ENCODE measurements at regions of chr7 and their contacts with region 1.

Region 1: GRCh38 chr7:43834463-43835251 is 34.7 kb downstream of the MRPS24 start:
- DNase-seq: no peak
- H3K4me3 ChIP-seq: no peak overlapping the region
- H3K27ac ChIP-seq: no peak overlapping the region
- H3K4me1 ChIP-seq: no peaks in the 10 kb centered on the region
- H3K27me3 ChIP-seq: no peaks in the 10 kb centered on the region
- CTCF ChIP-seq: no peak

Region 2: GRCh38 chr7:43577485-43577951 is 257.1 kb before region 1 on chr7:
- intact Hi-C with region 1: loop called (anchors 5 kb)
- DNase-seq: no peak
- H3K4me3 ChIP-seq: no peak overlapping the region
- H3K27ac ChIP-seq: no peak overlapping the region
- H3K4me1 ChIP-seq: no peaks in the 10 kb centered on the region
- H3K27me3 ChIP-seq: no peaks in the 10 kb centered on the region
- CTCF ChIP-seq: no peak

Region 3: DNA sequence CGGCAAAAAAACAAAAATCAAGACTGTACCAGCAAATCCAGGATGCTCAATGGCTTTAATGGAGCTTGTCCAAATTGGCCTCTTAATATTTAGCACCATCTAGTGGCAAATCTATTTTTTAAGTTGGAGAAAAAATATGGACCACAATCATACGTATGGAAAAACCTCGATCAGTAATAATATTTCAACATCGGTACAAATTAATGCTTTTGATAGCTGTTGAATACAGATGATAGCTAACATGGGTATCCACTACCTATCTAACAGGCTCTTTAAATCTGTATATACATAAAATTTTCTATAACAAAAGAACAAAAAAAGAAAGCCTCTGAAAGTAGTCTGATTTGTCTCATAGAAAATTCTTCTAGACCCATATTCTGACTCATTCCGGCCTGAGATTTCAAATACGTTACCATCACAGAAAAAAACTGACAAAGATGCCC is 134.6 kb before region 1 on chr7:
- intact Hi-C with region 1: loop called (anchors 5 kb)
- DNase-seq: no peak
- H3K4me3 ChIP-seq: no peak overlapping the region
- H3K27ac ChIP-seq: no peak overlapping the region
- H3K4me1 ChIP-seq: no peaks in the 10 kb centered on the region
- H3K27me3 ChIP-seq: no peaks in the 10 kb centered on the region
- CTCF ChIP-seq: peak; percentile 43

Region 4: DNA sequence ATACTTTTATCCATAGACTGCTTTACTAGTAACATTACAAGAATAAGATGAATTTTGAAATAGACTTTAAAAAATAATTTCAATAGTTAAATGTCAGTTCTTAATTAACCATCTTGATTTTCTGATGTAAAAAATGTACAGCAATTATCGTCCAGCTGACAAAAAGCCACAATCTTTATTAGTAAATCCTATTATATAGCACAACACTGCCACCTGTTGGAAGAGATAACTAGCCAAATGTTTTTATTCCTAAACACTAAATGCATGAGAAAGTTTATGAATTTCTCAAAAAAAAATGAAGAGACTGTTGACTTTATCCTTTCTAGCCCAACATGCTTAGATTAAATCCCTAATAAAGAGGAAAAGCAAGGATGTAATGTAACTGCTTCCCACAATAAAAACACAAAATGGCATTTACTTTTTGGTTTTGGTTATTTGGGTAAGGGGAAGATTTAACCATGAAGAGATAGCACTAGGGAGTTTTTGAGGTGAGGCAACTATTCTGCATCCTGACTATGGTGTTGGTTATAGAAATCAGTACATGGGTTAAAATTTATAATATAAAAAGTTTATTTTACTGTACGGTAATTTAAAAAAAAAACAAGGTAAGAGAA is 113.4 kb before region 1 on chr7:
- intact Hi-C with region 1: loop called (anchors 5 kb)
- DNase-seq: no peak
- H3K4me3 ChIP-seq: no peak overlapping the region
- H3K27ac ChIP-seq: no peak overlapping the region
- H3K4me1 ChIP-seq: no peaks in the 10 kb centered on the region
- H3K27me3 ChIP-seq: no peaks in the 10 kb centered on the region
- CTCF ChIP-seq: peak; percentile 56

Measured in colonic mucosa (tissue), 4 donors.